ENCODE measurements at regions of chr20 and their contacts with region 1.

Region 1: DNA sequence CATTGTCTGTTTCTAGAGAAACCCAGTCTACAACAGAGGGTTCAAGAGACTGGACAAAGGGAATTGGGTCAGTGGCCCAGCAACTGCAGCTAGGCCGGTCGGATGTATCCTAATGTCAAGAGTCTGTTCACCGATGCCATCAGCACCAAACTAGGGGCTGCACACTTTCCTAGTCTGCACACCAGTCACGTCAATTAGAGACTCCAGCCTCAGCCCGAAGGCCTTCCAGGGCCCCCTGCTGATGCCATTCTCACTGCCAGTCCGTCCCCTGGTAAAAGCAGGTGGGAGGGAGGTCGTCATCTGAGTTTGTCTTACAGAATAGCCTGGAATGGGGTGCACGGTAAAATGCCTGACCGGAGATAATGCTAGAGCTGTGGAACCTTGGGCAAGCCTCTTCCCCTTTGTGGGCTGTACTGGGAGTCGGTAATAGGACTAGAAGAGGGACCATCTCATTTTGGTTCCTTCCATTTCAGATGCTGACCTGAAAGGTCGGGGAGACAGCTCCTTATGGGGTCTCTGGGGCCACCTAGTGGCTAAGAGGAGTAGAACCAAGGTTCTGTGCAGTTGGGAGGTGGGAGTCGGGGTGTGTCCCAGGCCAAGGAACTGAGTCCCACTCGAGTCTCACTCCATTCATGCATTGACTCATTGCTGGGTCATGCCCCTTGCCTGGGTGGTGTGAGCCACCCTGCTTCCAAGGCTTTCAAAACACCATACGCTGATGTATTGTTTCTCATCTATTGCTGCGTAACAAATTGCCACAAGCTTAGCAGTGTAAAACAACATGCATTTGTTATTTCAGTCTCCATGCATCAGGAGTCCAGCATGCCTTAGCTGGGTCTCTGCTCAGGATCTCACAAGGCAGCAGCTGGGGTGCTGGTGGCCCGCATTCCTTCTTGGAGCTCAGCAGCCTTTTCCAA is 5.1 kb downstream of the SOX12 start:
- DNase-seq: peak; percentile 67
- H3K4me3 Mint-ChIP-seq: no peak overlapping the region
- H3K27ac Mint-ChIP-seq: no peak overlapping the region
- H3K4me1 Mint-ChIP-seq: peaks cover 23% of the 10 kb centered on the region
- H3K27me3 Mint-ChIP-seq: peaks cover 8% of the 10 kb centered on the region

Region 2: GRCh38 chr20:235891-236290 is 94.6 kb before region 1 on chr20:
- CTCF ChIA-PET with region 1: interaction called, 11 read pairs
- POLR2A ChIA-PET with region 1: interaction called, 3 read pairs
- DNase-seq: no peak
- H3K4me3 Mint-ChIP-seq: no peak overlapping the region
- H3K27ac Mint-ChIP-seq: no peak overlapping the region
- H3K4me1 Mint-ChIP-seq: peaks cover 22% of the 10 kb centered on the region
- H3K27me3 Mint-ChIP-seq: peaks cover 5% of the 10 kb centered on the region

Region 3: DNA sequence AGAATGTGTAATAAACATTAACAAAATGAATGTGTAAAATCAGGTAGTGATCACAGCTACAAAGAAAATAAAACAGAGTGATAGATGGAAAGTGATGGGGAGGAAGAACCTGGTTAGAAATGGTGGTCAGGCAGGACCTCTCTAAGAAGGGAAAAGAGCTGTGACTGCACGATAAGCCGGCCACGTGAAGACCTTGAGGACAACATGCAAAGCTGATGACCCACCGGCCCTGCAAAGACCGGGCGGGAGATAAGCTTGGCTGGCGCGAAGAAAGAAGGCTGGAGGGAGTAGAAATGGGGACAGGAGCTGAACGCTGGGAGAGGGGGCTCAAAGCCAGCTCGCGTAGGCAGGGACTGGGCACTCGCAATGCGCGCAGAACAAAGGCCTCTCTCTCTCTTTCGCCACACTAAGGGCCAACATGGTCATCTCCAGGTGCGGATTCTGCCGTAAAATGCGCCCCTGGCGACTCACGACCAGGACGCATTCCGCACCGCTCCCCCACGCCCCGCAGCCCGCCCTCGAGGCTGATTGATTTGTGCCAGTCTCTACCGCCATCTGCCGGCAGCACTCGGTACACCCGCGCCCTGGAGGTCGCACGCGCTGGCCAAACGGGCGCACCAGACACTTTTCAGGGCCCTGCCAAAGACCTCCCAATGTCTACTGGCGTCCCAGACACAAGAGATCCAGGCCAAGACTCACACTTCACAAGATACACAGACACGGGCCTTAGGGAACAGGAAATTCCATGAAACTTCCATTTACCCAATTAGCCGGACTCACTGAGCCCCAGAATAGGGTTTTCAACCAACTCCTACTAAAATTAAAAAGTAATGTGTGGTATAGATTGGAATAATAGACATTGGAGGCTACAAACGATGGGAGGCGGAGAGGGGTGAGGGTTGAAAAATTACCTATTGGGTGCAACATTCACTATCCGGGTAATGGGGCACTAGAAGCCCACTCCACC is 63.6 kb before region 1 on chr20:
- CTCF ChIA-PET with region 1: interaction called, 10 read pairs
- POLR2A ChIA-PET with region 1: no interaction called
- DNase-seq: peak; percentile 89
- H3K4me3 Mint-ChIP-seq: peak overlapping the region; percentile 65
- H3K27ac Mint-ChIP-seq: no peak overlapping the region
- H3K4me1 Mint-ChIP-seq: peaks cover 9% of the 10 kb centered on the region
- H3K27me3 Mint-ChIP-seq: peaks cover 12% of the 10 kb centered on the region

Region 4: DNA sequence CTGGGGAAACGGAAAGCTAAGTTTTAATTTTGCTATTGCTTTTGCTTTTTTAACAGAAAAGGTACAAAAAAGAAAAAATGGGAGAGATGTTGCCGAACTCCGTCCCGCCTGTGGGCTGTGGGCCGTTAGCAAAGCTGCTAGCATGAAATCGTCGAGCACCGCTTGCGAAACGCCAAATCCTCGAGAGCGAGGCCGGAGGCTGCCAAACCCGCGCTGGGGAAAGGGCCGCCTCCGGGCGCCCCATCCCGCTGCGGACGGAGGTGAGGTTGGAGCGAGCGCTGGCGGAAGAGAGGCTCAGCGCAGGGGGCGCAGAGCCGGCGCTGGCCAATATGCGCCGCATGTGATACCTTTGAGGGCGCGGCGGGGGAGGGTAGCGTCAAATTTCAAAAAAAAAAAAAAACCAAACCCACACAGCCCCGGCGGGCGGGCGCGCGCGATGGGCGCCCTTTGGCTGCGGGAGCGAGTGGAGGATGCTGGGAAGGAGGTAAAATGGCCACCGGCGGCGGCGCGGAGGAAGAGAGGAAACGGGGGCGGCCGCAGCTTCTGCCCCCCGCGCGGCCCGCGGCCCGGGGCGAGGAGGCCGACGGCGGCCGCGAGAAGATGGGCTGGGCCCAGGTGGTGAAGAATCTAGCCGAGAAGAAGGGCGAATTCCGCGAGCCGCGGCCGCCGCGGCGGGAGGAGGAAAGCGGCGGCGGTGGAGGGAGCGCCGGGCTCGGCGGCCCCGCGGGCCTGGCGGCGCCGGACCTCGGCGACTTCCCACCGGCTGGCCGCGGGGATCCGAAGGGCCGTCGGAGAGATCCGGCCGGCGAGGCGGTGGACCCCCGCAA is 33.2 kb before region 1 on chr20 and contains the start of gene ZCCHC3:
- CTCF ChIA-PET with region 1: interaction called, 17 read pairs
- POLR2A ChIA-PET with region 1: interaction called, 95 read pairs
- DNase-seq: peak; percentile 86
- H3K4me3 Mint-ChIP-seq: peak within 1 kb of the TSS; percentile 96
- H3K27ac Mint-ChIP-seq: peak within 1 kb of the TSS; percentile 98
- H3K4me1 Mint-ChIP-seq: peaks cover 44% of the 10 kb centered on the region
- H3K27me3 Mint-ChIP-seq: no peaks in the 10 kb centered on the region
- total RNA-seq, gene ZCCHC3: 23.5 to 23.9 TPM

Region 5: DNA sequence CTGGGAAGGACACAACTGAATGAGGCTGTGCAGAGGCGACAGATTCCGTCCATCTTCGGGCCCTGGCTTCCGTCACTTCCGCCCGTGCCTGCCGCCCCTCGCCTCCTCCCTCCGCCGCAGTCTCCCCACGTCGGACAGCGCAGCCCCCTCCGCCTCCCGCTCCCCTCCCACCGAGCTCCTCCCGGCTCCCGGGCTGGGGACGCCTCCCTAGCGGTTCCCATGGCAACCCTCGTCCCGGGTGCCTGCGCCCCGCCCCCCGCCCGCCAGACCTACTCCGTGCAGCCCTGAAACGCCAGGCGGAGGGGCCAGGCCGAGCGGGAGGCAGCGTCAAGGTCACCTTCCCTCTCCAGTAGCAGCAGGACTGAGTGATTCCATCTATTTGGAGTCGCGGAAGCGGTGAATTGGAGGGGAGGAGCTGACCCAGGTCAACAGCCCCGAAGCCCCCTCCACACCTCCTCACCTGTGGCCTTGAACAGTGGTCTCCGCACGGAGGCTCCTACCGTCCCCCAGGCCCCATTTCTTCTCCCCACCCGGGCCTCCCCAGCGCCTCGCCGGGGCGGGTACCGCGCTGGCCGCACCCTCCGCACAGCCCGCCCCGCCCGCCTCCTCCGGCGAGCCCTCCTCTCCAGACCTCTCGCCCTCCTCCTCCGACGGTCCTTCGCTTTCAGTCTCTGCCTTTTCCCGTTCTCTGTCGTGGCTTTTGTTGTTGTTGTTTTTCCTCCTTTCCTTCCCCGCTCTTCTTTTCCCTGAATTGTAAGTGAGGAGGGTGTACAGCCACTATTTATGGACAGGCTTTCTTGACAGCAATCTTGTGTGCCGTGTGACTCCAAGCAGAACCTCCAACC is 17.4 kb after region 1 on chr20:
- CTCF ChIA-PET with region 1: interaction called, 15 read pairs
- POLR2A ChIA-PET with region 1: interaction called, 5 read pairs
- DNase-seq: peak; percentile 64
- H3K4me3 Mint-ChIP-seq: peak overlapping the region; percentile 87
- H3K27ac Mint-ChIP-seq: peak overlapping the region; percentile 44
- H3K4me1 Mint-ChIP-seq: peaks cover 26% of the 10 kb centered on the region
- H3K27me3 Mint-ChIP-seq: peaks cover 10% of the 10 kb centered on the region